Body of pancreas (tissue), 4 donors: ENCODE measurements at regions of chrX and their contacts with region 1.

Region 1: DNA sequence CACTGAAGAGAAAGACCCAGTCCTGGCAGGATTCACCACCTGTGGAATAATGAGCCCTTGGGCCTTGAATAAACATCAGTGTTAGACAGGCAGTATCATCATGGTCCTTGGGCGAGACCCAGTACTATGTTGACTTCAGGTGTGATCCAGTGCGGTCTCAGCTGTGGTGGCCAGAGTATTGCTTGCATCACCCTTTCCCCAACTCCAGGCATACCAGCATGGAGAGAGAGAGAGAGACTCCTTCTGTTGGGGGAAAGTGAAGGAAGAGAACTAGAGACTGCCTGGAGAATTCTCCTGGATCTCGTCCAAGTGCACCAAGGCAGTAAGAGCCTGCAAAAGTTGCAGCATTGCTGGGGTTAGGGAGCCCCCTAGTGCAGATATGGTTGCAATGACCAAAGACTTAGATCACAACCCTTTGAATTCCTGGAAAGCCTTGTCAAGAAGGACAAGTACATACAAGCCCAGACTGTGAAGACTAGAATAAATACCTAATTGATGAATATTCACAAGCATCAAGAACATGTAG is 61.1 kb upstream of the VAMP7 start:
- DNase-seq: peak; percentile 70 to 77 (median 72)
- ATAC-seq: peak; percentile 69
- H3K4me3 ChIP-seq: no peak overlapping the region
- H3K27ac ChIP-seq: no peak overlapping the region
- H3K4me1 ChIP-seq: no peaks in the 10 kb centered on the region
- H3K27me3 ChIP-seq: no peaks in the 10 kb centered on the region
- CTCF ChIP-seq: peak; percentile 28 to 79 (median 66)
- POLR2A ChIP-seq: no peak

Region 2: DNA sequence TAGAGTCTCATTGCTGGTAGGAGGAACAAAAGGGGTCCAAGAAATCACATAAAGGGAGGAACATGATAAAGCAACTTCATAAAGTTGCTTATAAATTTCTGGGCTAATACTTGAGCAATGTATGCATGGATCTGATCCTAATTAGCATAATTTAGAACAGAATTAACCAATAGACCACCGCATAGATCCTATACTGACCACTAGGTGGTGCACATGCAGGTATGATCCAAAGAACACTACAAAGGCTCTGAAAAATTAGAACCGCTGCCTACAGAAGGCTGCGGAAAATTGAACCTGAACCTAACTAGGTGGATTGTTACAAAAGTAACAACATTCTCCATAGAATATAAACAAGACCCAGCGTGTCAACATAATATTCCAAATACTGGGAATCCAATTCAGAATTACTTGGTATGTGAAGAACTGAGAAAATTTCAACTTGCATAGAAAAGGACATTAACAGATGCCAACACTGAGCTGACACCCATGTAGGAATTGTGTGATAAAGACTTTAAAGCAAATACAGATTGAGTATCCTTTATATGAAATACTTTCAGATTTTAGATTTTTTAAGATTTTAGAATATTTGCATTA is 725.5 kb before region 1 on chrX:
- intact Hi-C with region 1: loop called (anchors 10 kb)
- DNase-seq: peak in 3 of 4 donors; percentile 16 to 25 (median 19)
- ATAC-seq: no peak
- H3K4me3 ChIP-seq: no peak overlapping the region
- H3K27ac ChIP-seq: no peak overlapping the region
- H3K4me1 ChIP-seq: no peaks in the 10 kb centered on the region
- H3K27me3 ChIP-seq: no peaks in the 10 kb centered on the region
- CTCF ChIP-seq: peak; percentile 33 to 55 (median 48)
- POLR2A ChIP-seq: no peak

Region 3: DNA sequence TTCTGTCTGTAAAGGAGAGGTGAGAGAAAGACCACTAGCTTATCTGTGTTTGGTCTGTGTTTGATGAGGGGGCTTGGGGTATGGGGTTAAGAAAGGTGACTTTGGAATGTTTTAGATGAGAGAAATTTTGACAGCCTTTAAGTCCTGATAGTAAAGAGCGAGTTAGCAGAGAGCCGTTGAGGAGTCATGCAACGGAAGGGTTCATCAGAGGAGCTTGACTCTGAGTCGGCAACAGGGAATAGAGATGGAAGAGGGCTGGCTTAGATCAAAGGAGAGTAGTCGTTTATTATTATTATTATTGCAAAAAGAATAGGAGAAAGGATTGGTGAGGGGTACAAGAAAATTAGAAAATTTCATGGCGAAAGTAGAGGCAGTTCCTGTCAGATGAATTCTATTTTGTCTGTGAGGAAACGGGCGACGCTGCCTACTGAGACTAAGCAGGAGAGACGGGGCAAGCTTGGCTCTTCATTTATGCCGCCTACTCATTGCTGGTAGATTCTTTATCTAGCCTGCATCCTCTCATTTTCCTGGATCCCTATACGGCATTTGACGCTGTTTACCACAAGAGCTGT is 60.6 kb after region 1 on chrX:
- intact Hi-C with region 1: no loop called
- DNase-seq: no peak
- ATAC-seq: no peak
- H3K4me3 ChIP-seq: peak overlapping the region; percentile 10 to 49
- H3K27ac ChIP-seq: peak overlapping the region in 2 of 4 donors; percentile 79 to 85
- H3K4me1 ChIP-seq: peaks cover 10% of the 10 kb centered on the region
- H3K27me3 ChIP-seq: no peaks in the 10 kb centered on the region
- CTCF ChIP-seq: no peak
- POLR2A ChIP-seq: no peak